HEK293T (cell line): ENCODE measurements at regions of chr20 and their contacts with region 1.

Region 1: GRCh38 chr20:44885392-44886265 is at the start of gene YWHAB:
- DNase-seq: peak; percentile 97

Region 2: GRCh38 chr20:44909872-44910689 is 24.5 kb after region 1 on chr20 and contains the start of gene PABPC1L:
- CTCF ChIA-PET with region 1: interaction called, 3 read pairs
- POLR2A ChIA-PET with region 1: interaction called, 11 read pairs
- DNase-seq: peak; percentile 80

Region 3: GRCh38 chr20:44942264-44942973 is 56.8 kb after region 1 on chr20:
- CTCF ChIA-PET with region 1: no interaction called
- POLR2A ChIA-PET with region 1: no interaction called
- DNase-seq: no peak